Naive thymus-derived CD4-positive, alpha-beta T cell (primary cell): ENCODE measurements at regions of chr15 and their contacts with region 1.

Region 1: GRCh38 chr15:84929744-84930371 is 45.4 kb downstream of the SLC28A1 start:
- DNase-seq: no peak
- ATAC-seq: no peak
- H3K4me3 ChIP-seq: no peak overlapping the region
- H3K4me3 Mint-ChIP-seq: no peak overlapping the region
- H3K27ac ChIP-seq: no peak overlapping the region
- H3K27ac Mint-ChIP-seq: no peak overlapping the region
- H3K4me1 ChIP-seq: peaks cover 0 to 4% of the 10 kb centered on the region in 2 donors
- H3K4me1 Mint-ChIP-seq: peaks cover 5 to 8% (median 6%) of the 10 kb centered on the region in 7 donors
- H3K27me3 ChIP-seq: no peaks in the 10 kb centered on the region
- H3K27me3 Mint-ChIP-seq: no peaks in the 10 kb centered on the region

Region 2: GRCh38 chr15:84600851-84601838 is 328.7 kb before region 1 on chr15 and contains the start of gene ZSCAN2:
- CTCF ChIA-PET with region 1: interaction called, 5 read pairs
- POLR2A ChIA-PET with region 1: no interaction called
- intact Hi-C with region 1: loop called in 1 of 2 experiments (anchors 1 kb)
- DNase-seq: peak; percentile 83 to 93 (median 90)
- ATAC-seq: peak; percentile 98
- H3K4me3 ChIP-seq: peak within 1 kb of the TSS; percentile 96
- H3K4me3 Mint-ChIP-seq: peak within 1 kb of the TSS; percentile 89 to 99 (median 96)
- H3K27ac ChIP-seq: peak within 1 kb of the TSS; percentile 77
- H3K27ac Mint-ChIP-seq: peak within 1 kb of the TSS; percentile 67 to 97 (median 88)
- H3K4me1 ChIP-seq: peaks cover 29 to 36% of the 10 kb centered on the region in 2 donors
- H3K4me1 Mint-ChIP-seq: peaks cover 53 to 89% (median 71%) of the 10 kb centered on the region in 7 donors
- H3K27me3 ChIP-seq: no peaks in the 10 kb centered on the region
- H3K27me3 Mint-ChIP-seq: no peaks in the 10 kb centered on the region
- total RNA-seq, gene ZSCAN2: 4.8 to 13.0 (median 6.8) TPM

Region 3: GRCh38 chr15:84844964-84845363 is 84.9 kb before region 1 on chr15:
- CTCF ChIA-PET with region 1: no interaction called
- POLR2A ChIA-PET with region 1: interaction called, 3 read pairs
- intact Hi-C with region 1: loop called (anchors 1 to 5 kb)
- DNase-seq: no peak
- ATAC-seq: no peak
- H3K4me3 ChIP-seq: no peak overlapping the region
- H3K4me3 Mint-ChIP-seq: no peak overlapping the region
- H3K27ac ChIP-seq: no peak overlapping the region
- H3K27ac Mint-ChIP-seq: no peak overlapping the region
- H3K4me1 ChIP-seq: no peaks in the 10 kb centered on the region
- H3K4me1 Mint-ChIP-seq: peaks cover 0 to 2% (median 0%) of the 10 kb centered on the region in 7 donors
- H3K27me3 ChIP-seq: no peaks in the 10 kb centered on the region
- H3K27me3 Mint-ChIP-seq: peaks cover 0 to 5% (median 0%) of the 10 kb centered on the region in 5 donors

Region 4: DNA sequence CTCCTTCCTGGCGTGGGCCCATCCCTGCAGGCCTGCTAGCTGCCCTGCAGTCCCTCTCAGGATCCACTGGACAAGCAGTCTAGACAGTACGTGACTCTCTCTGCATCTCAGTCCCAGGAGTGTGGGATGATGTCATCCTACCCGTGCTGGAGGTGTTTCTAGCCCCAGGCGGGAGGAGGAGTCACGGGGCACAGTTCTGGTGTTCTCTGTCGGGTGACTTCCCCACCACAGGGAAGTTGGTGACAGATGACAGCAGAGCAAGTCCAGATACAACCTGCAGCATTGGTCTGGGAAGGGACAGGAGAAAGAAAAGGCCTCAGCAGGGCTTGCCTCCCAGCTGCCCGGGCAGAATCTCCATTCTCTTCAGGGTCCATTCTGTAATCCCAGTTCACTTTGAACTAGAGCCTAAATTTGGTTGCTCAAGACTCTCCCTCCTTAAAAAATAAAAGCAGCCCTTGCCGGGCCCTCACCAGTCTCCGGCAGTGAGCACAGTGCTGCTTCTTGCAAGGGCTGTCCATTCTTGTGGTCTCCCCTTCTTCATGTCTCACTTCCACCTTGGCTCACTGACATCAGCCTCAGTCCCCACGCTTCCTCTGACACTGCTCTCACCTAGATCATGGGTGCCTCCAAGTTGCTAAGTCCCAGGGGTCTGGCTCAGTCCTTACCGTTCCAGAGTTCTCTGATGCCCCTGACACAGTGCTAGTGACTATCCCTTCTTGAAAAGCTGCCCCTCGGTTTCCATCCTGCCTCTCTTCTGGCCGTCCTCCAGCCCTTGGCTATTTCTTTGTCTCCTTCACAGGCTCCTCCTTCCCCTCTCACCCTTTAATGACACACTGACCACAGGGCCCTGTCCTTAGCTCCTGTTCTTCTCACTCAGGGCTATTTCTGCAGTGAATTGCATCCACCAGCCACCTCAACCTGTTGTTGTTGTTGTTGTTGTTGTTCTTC is 14.6 kb before region 1 on chr15:
- CTCF ChIA-PET with region 1: interaction called, 3 read pairs
- POLR2A ChIA-PET with region 1: no interaction called
- intact Hi-C with region 1: loop called in 1 of 2 experiments (anchors 2 kb)
- DNase-seq: peak in 1 of 9 donors; percentile 67
- ATAC-seq: peak; percentile 67
- H3K4me3 ChIP-seq: no peak overlapping the region
- H3K4me3 Mint-ChIP-seq: peak overlapping the region in 1 of 10 donors; percentile 91
- H3K27ac ChIP-seq: no peak overlapping the region
- H3K27ac Mint-ChIP-seq: peak overlapping the region in 2 of 9 donors; percentile 60 to 94
- H3K4me1 ChIP-seq: no peaks in the 10 kb centered on the region
- H3K4me1 Mint-ChIP-seq: peaks cover 0 to 28% (median 0%) of the 10 kb centered on the region in 7 donors
- H3K27me3 ChIP-seq: no peaks in the 10 kb centered on the region
- H3K27me3 Mint-ChIP-seq: peaks cover 2 to 13% (median 6%) of the 10 kb centered on the region in 5 donors

Region 5: GRCh38 chr15:84947947-84948830 is 18.3 kb after region 1 on chr15:
- CTCF ChIA-PET with region 1: no interaction called
- POLR2A ChIA-PET with region 1: no interaction called
- intact Hi-C with region 1: no loop called
- DNase-seq: no peak
- ATAC-seq: no peak
- H3K4me3 ChIP-seq: no peak overlapping the region
- H3K4me3 Mint-ChIP-seq: no peak overlapping the region
- H3K27ac ChIP-seq: no peak overlapping the region
- H3K27ac Mint-ChIP-seq: no peak overlapping the region
- H3K4me1 ChIP-seq: no peaks in the 10 kb centered on the region
- H3K4me1 Mint-ChIP-seq: no peaks in the 10 kb centered on the region
- H3K27me3 ChIP-seq: no peaks in the 10 kb centered on the region
- H3K27me3 Mint-ChIP-seq: peaks cover 0 to 16% (median 0%) of the 10 kb centered on the region in 5 donors